BJ (cell line): ENCODE measurements at regions of chr19 and their contacts with region 1.

Region 1: DNA sequence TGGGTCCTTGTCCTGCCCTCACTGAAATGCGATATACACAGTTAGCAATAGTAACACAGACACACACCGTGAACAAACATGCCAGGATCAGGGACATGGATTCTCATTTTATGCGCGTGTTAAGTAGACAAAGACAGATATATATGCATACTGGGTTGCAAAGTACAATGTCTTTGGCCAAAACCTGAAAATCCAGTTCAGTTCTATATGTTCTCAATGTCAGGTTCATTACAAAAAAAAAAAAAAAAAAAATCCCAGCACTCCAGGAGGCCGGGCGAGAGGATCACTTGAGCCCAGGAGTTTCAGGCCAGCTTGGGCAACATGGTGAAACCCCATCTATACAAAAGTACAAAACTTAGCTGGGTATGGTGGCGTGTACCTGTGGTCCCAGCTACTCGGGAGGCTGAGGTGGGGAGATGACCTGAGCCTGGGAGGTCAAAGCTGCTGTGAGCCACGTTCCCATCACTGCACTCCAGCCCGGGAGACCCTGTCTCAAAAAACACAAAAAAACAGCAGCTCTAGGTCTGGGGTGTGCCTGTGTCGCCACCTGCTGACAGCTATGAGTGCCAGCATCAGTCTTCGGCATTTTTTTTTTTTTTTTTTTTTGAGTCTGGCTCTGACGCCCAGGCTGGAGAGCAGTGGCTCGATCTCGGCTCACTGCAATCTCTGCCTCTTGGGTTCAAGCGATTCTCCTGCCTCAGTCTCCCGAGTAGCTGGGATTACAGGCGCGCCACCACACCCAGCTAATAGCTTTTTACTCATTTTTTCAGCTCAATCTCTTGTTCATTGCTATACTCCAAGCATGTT is 10.3 kb downstream of the AP2S1 start:
- DNase-seq: no peak
- H3K4me3 ChIP-seq: no peak overlapping the region
- H3K27me3 ChIP-seq: no peaks in the 10 kb centered on the region
- CTCF ChIP-seq: peak; percentile 90

Region 2: GRCh38 chr19:46600384-46601317 is 239.7 kb before region 1 on chr19:
- CTCF ChIA-PET with region 1: no interaction called
- POLR2A ChIA-PET with region 1: interaction called, 10 read pairs
- DNase-seq: peak; percentile 70
- H3K4me3 ChIP-seq: peak overlapping the region; percentile 99
- H3K27me3 ChIP-seq: peaks cover 1% of the 10 kb centered on the region; the same call in 1 of the 2 replicates
- CTCF ChIP-seq: no peak

Region 3: GRCh38 chr19:46753420-46754155 is 86.8 kb before region 1 on chr19:
- CTCF ChIA-PET with region 1: interaction called, 89 read pairs
- POLR2A ChIA-PET with region 1: no interaction called
- DNase-seq: no peak
- H3K4me3 ChIP-seq: no peak overlapping the region
- H3K27me3 ChIP-seq: no peaks in the 10 kb centered on the region
- CTCF ChIP-seq: peak; percentile 57

Region 4: GRCh38 chr19:46766569-46767317 is 73.6 kb before region 1 on chr19:
- CTCF ChIA-PET with region 1: interaction called, 17 read pairs
- POLR2A ChIA-PET with region 1: no interaction called
- DNase-seq: no peak
- H3K4me3 ChIP-seq: no peak overlapping the region
- H3K27me3 ChIP-seq: no peaks in the 10 kb centered on the region
- CTCF ChIP-seq: peak; percentile 72

Region 5: DNA sequence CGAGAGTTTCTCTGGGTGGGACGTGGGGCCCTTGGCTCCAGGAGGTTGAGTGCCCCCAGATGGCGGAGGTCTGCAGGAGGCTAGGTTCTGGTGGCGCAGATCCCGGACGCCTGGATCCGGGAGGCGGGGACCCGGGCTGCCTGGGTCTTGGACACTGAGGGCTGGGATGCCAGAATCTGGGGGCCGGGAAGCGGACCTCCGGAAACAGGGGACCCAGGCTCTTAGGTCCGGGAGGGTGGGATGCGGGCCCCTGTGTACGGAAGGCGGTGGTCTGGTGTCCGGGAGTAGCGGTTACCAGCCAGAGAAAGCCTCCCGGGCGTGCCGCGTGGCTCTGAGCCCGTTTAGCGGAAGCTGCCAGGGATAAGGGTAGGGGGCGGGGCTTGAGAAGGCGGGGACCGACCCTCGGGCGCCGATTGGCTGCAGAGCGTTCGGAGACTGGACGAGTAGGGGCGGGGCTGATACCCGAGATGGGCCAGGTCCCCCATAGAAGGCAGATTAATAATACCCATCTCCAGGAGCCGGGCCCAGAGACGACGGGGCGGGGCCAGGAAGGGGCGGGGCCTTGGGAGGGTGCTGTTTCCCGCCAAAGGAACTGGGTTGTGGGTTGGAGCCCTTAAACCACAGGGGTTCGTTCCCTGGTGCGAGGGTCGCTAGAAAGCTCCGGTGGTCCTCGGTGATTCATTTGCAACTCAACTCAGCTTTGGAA is 51.9 kb before region 1 on chr19 and contains the start of gene SLC1A5:
- CTCF ChIA-PET with region 1: interaction called, 40 read pairs
- POLR2A ChIA-PET with region 1: no interaction called
- DNase-seq: peak; percentile 75
- H3K4me3 ChIP-seq: peak within 1 kb of the TSS; percentile 95
- H3K27me3 ChIP-seq: no peaks in the 10 kb centered on the region
- CTCF ChIP-seq: peak; percentile 7; the same call in 1 of the 2 replicates
- polyA plus RNA-seq, gene SLC1A5: 409 and 506 TPM in 2 replicates

Region 6: GRCh38 chr19:46813839-46814363 is 26.4 kb before region 1 on chr19:
- CTCF ChIA-PET with region 1: no interaction called
- POLR2A ChIA-PET with region 1: no interaction called
- DNase-seq: no peak
- H3K4me3 ChIP-seq: no peak overlapping the region
- H3K27me3 ChIP-seq: no peaks in the 10 kb centered on the region
- CTCF ChIP-seq: no peak